ENCODE measurements at regions of chr11 and their contacts with region 1.

Region 1: GRCh38 chr11:95231127-95231880 is at the start of gene SESN3:
- DNase-seq: peak; percentile 100
- H3K4me3 ChIP-seq: peak within 1 kb of the TSS; percentile 86
- H3K4me3 Mint-ChIP-seq: no peak within 1 kb of the TSS
- H3K27ac Mint-ChIP-seq: peak within 1 kb of the TSS; percentile 29
- H3K4me1 ChIP-seq: peaks cover 7% of the 10 kb centered on the region; the same call in 1 of the 2 replicates
- H3K4me1 Mint-ChIP-seq: peaks cover 6% of the 10 kb centered on the region
- H3K27me3 ChIP-seq: no peaks in the 10 kb centered on the region
- H3K27me3 Mint-ChIP-seq: no peaks in the 10 kb centered on the region
- CTCF ChIP-seq: no peak
- total RNA-seq, gene SESN3: 28.2 and 29.2 TPM in 2 replicates

Region 2: DNA sequence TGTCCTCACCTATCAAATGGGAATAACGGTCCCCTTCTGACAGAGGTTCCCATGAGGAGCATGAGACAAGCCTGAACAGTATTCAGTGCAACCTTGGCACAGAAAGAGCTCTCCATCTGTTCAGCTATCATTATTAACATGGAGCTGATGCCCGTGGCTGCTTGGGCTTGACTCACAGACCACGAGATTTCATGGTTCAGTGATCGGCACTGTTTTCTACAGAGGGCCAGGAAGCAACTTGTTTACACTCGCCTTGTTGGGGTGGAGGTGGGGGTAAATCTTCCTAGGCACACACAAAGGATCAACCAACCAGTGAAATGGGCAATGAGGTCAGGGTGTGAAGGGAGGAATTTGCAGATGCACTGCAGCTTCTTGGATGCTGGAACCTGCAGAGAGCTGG is 346.2 kb before region 1 on chr11:
- CTCF ChIA-PET with region 1: no interaction called
- POLR2A ChIA-PET with region 1: no interaction called
- intact Hi-C with region 1: no loop called
- DNase-seq: no peak
- H3K4me3 ChIP-seq: no peak overlapping the region
- H3K4me3 Mint-ChIP-seq: no peak overlapping the region
- H3K27ac Mint-ChIP-seq: no peak overlapping the region
- H3K4me1 ChIP-seq: no peaks in the 10 kb centered on the region
- H3K4me1 Mint-ChIP-seq: no peaks in the 10 kb centered on the region
- H3K27me3 ChIP-seq: no peaks in the 10 kb centered on the region
- H3K27me3 Mint-ChIP-seq: no peaks in the 10 kb centered on the region
- CTCF ChIP-seq: no peak

Region 3: DNA sequence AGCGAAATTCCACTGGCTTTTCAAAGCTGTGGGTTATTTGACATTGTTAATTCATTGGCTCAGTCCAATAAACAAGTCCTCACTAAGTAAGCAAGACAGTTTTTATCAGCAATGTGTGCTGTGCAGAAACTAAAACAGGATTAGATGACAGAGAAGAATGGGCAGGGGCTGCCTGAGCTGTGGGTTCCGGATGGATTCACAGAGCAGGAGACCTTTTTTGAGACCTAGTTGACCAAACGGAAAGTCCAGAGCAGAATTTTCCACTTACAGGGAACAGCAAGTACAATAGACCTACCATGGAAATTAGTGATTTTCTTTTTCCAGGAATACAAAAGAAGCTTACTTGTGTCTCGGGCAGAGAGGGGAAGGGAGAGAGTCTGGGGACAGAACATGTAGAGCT is 187.3 kb before region 1 on chr11:
- CTCF ChIA-PET with region 1: no interaction called
- POLR2A ChIA-PET with region 1: no interaction called
- intact Hi-C with region 1: no loop called
- DNase-seq: no peak
- H3K4me3 ChIP-seq: no peak overlapping the region
- H3K4me3 Mint-ChIP-seq: no peak overlapping the region
- H3K27ac Mint-ChIP-seq: no peak overlapping the region
- H3K4me1 ChIP-seq: no peaks in the 10 kb centered on the region
- H3K4me1 Mint-ChIP-seq: peaks cover 4% of the 10 kb centered on the region
- H3K27me3 ChIP-seq: no peaks in the 10 kb centered on the region; the same call in 1 of the 2 replicates
- H3K27me3 Mint-ChIP-seq: peaks cover 5% of the 10 kb centered on the region
- CTCF ChIP-seq: no peak

Region 4: DNA sequence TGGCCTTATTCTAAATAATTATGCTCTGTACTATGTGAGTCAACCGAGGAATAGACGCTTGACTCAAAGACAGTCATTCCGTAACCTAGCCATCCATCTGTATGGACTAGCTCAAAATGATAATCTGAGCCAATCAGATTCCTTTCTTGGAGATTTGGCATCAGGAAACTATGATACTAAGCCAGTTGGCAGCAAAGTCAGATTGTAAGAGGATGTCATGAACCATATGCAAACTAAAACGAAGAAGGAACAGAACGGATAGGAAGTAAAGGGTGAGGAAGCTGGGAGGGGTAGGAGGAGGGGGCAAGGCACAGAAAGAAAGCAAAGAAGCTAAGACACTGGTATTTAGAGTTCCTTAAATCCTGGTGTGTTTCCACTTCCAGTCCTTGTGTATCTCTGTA is 10.4 kb after region 1 on chr11:
- CTCF ChIA-PET with region 1: interaction called, 9 read pairs
- POLR2A ChIA-PET with region 1: interaction called, 17 read pairs
- intact Hi-C with region 1: loop called (anchors 1 kb)
- DNase-seq: no peak
- H3K4me3 ChIP-seq: no peak overlapping the region
- H3K4me3 Mint-ChIP-seq: no peak overlapping the region
- H3K27ac Mint-ChIP-seq: peak overlapping the region; percentile 72
- H3K4me1 ChIP-seq: peaks cover 45% of the 10 kb centered on the region
- H3K4me1 Mint-ChIP-seq: peaks cover 31% of the 10 kb centered on the region
- H3K27me3 ChIP-seq: no peaks in the 10 kb centered on the region
- H3K27me3 Mint-ChIP-seq: no peaks in the 10 kb centered on the region
- CTCF ChIP-seq: no peak

Region 5: GRCh38 chr11:95279921-95280868 is 48.9 kb after region 1 on chr11:
- CTCF ChIA-PET with region 1: interaction called, 12 read pairs
- POLR2A ChIA-PET with region 1: interaction called, 19 read pairs
- intact Hi-C with region 1: loop called (anchors 1 kb)
- DNase-seq: no peak
- H3K4me3 ChIP-seq: no peak overlapping the region
- H3K4me3 Mint-ChIP-seq: peak overlapping the region; percentile 31
- H3K27ac Mint-ChIP-seq: peak overlapping the region; percentile 83
- H3K4me1 ChIP-seq: peaks cover 68% of the 10 kb centered on the region
- H3K4me1 Mint-ChIP-seq: peaks cover 52% of the 10 kb centered on the region
- H3K27me3 ChIP-seq: no peaks in the 10 kb centered on the region
- H3K27me3 Mint-ChIP-seq: no peaks in the 10 kb centered on the region
- CTCF ChIP-seq: no peak

Region 6: GRCh38 chr11:95364324-95365295 is 133.3 kb after region 1 on chr11:
- CTCF ChIA-PET with region 1: no interaction called
- POLR2A ChIA-PET with region 1: interaction called, 3 read pairs
- intact Hi-C with region 1: loop called (anchors 2 kb)
- DNase-seq: peak in 1 of 2 experiments; percentile 61
- H3K4me3 ChIP-seq: no peak overlapping the region
- H3K4me3 Mint-ChIP-seq: peak overlapping the region; percentile 50
- H3K27ac Mint-ChIP-seq: peak overlapping the region; percentile 80
- H3K4me1 ChIP-seq: peaks cover 37% of the 10 kb centered on the region
- H3K4me1 Mint-ChIP-seq: peaks cover 38% of the 10 kb centered on the region
- H3K27me3 ChIP-seq: no peaks in the 10 kb centered on the region
- H3K27me3 Mint-ChIP-seq: no peaks in the 10 kb centered on the region
- CTCF ChIP-seq: no peak

Region 7: GRCh38 chr11:95404330-95404729 is 173.0 kb after region 1 on chr11:
- CTCF ChIA-PET with region 1: no interaction called
- POLR2A ChIA-PET with region 1: no interaction called
- intact Hi-C with region 1: no loop called
- DNase-seq: peak in 1 of 2 experiments; percentile 18
- H3K4me3 ChIP-seq: no peak overlapping the region
- H3K4me3 Mint-ChIP-seq: no peak overlapping the region
- H3K27ac Mint-ChIP-seq: no peak overlapping the region
- H3K4me1 ChIP-seq: no peaks in the 10 kb centered on the region
- H3K4me1 Mint-ChIP-seq: no peaks in the 10 kb centered on the region
- H3K27me3 ChIP-seq: no peaks in the 10 kb centered on the region
- H3K27me3 Mint-ChIP-seq: no peaks in the 10 kb centered on the region
- CTCF ChIP-seq: peak; percentile 11 to 22

Region 8: DNA sequence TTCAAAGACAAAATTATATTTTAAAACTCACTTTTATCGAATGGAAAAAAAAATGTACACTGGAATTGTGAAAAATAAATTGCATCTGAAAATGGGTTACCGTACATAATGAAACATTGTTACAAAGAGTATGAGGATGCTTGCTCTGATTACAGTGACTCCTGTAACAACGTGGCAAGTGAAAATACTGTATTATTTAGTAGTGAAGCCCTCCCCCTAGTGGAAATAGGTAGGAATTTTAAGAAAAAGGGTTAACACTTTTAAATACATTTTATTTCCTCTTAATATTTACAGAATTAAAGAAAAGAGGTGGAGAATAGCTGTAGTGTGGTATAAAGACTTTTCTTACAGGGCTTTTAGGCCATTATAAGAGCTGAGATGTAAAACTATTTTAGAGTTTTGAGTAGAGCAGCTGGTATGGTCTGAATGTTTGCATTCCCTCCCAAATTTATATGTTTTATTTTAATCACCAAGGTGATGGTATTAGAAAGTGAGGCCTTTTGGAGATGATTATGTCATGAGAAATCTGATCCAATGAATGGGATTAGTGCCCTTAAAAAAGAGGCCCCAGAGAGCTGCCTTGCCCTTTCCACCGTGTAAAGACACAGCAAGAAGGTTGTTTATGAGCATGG is 533.1 kb after region 1 on chr11:
- CTCF ChIA-PET with region 1: no interaction called
- POLR2A ChIA-PET with region 1: no interaction called
- intact Hi-C with region 1: loop called (anchors 1 kb)
- DNase-seq: peak in 1 of 2 experiments; percentile 56
- H3K4me3 ChIP-seq: no peak overlapping the region
- H3K4me3 Mint-ChIP-seq: no peak overlapping the region
- H3K27ac Mint-ChIP-seq: no peak overlapping the region
- H3K4me1 ChIP-seq: peaks cover 7% of the 10 kb centered on the region; the same call in 1 of the 2 replicates
- H3K4me1 Mint-ChIP-seq: peaks cover 6% of the 10 kb centered on the region
- H3K27me3 ChIP-seq: no peaks in the 10 kb centered on the region
- H3K27me3 Mint-ChIP-seq: peaks cover 8% of the 10 kb centered on the region
- CTCF ChIP-seq: peak; percentile 56 to 91

Region 9: DNA sequence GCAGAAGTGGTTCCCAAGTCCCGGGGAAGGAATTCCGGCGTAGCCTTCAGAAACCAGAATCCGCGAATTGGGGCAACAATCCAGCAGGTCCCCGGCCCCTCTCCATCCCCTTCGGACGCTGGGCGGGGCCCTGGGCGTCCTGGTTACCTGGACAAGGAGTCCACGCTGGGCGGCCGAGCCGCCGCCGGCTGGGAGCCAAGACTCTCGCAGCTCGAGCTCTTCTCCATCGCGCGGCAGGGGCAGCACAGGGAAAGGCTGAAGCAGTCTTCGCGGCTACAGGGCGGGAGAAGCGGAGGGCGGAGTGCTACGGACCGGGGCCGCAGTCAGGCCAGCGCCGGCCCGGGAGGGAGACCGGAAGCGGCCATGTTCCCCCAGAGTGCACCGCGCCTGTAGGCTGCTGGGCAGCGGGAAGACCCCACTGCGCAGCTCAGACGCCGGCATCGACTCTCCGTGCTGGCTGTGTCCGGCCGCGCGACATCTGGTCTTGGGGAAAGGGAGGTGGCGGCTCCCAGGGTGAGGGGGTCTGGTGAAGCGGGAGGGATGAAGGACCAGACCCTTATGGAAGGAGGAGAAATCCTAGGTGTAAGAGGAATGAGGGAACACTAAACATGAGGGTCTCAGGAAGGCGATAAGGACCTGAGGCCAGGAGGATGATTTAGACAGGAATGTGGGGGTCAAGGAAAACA is 692.6 kb after region 1 on chr11 and contains the start of gene MTMR2:
- CTCF ChIA-PET with region 1: no interaction called
- POLR2A ChIA-PET with region 1: interaction called, 11 read pairs
- intact Hi-C with region 1: no loop called
- DNase-seq: peak; percentile 88 to 91
- H3K4me3 ChIP-seq: peak within 1 kb of the TSS; percentile 84
- H3K4me3 Mint-ChIP-seq: peak within 1 kb of the TSS; percentile 88
- H3K27ac Mint-ChIP-seq: peak within 1 kb of the TSS; percentile 96
- H3K4me1 ChIP-seq: peaks cover 6% of the 10 kb centered on the region
- H3K4me1 Mint-ChIP-seq: peaks cover 13% of the 10 kb centered on the region
- H3K27me3 ChIP-seq: no peaks in the 10 kb centered on the region
- H3K27me3 Mint-ChIP-seq: no peaks in the 10 kb centered on the region
- CTCF ChIP-seq: peak in 1 of 2 experiments; percentile 14
- total RNA-seq, gene MTMR2: 75.2 and 76.4 TPM in 2 replicates